Ovary (tissue), 10 donors: ENCODE measurements at regions of chr19 and their contacts with region 1.

Region 1: GRCh38 chr19:16185123-16185767 is at the start of gene FAM32A:
- DNase-seq: peak; percentile 99 to 100 (median 99)
- H3K4me3 ChIP-seq: peak within 1 kb of the TSS; percentile 63
- H3K27ac ChIP-seq: peak within 1 kb of the TSS in 1 of 2 donors; percentile 26
- H3K4me1 ChIP-seq: no peaks in the 10 kb centered on the region
- H3K27me3 ChIP-seq: no peaks in the 10 kb centered on the region
- CTCF ChIP-seq: peak; percentile 14 to 41 (median 26)
- EP300 ChIP-seq: no peak
- POLR2A ChIP-seq: peak; percentile 53
- total RNA-seq, gene FAM32A: 37.9 to 62.6 (median 43.7) TPM

Region 2: GRCh38 chr19:15629003-15629880 is 556.0 kb before region 1 on chr19:
- intact Hi-C with region 1: loop called in 2 of 4 experiments (anchors 5 kb)
- DNase-seq: peak; percentile 57 to 84 (median 79)
- H3K4me3 ChIP-seq: no peak overlapping the region
- H3K27ac ChIP-seq: no peak overlapping the region
- H3K4me1 ChIP-seq: no peaks in the 10 kb centered on the region
- H3K27me3 ChIP-seq: no peaks in the 10 kb centered on the region
- CTCF ChIP-seq: peak; percentile 72 to 83 (median 83)
- EP300 ChIP-seq: no peak
- POLR2A ChIP-seq: no peak

Region 3: DNA sequence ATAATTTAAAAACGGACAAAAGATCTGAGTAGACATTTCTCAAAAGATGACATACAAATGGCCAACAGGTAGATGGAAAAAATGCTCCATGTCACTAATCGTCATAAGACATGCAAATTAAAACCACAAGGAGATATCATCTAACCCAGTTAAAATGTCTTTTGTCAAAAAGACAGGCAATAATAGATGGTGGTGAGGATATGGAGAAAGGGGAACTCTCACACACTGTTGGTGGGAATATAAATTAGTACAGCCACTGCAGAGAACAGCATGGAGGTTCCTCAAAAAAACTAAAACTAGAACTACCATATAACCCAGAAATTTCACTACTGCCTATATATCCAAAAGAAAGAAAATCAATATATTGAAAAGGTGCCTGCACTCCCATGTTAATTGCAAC is 198.5 kb before region 1 on chr19:
- intact Hi-C with region 1: no loop called
- DNase-seq: no peak
- H3K4me3 ChIP-seq: no peak overlapping the region
- H3K27ac ChIP-seq: no peak overlapping the region
- H3K4me1 ChIP-seq: no peaks in the 10 kb centered on the region
- H3K27me3 ChIP-seq: no peaks in the 10 kb centered on the region
- CTCF ChIP-seq: no peak
- EP300 ChIP-seq: no peak
- POLR2A ChIP-seq: no peak

Region 4: DNA sequence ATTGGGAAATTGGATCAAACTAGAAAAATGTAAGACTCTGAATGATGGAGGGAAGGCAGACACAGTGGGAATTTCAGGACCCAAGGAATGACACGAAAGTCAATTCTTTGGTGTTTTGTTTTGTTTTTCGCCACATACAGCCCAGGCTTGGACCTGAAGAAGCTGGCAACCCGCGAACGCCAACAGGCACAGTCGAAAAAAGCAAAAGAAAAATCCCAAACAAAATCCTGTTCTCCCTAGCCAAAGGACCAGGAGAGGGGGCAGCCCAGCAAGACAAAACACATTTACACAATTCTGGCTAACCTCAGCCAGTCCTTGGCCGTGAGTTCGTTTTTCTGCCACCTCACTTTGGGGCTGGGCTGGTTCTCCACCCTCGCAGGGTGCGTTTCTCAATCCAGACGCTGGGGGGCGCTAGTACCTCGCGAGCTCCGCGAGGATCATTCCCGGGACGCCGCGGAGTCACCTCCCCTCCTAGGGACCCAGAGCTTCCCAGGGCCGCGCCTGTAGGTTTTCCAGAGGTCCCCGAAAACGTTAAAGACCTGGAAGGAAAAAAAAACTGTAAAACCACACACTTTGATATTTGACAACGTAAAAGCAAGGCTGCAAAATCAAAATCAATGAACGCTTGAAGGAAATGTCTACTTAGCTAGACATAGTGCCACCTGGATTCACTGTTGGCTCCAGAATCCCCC is 143.8 kb before region 1 on chr19:
- intact Hi-C with region 1: loop called (anchors 2 to 5 kb)
- DNase-seq: peak; percentile 80 to 91 (median 88)
- H3K4me3 ChIP-seq: no peak overlapping the region
- H3K27ac ChIP-seq: no peak overlapping the region
- H3K4me1 ChIP-seq: no peaks in the 10 kb centered on the region
- H3K27me3 ChIP-seq: no peaks in the 10 kb centered on the region
- CTCF ChIP-seq: peak; percentile 90 to 92 (median 90)
- EP300 ChIP-seq: no peak
- POLR2A ChIP-seq: no peak

Region 5: GRCh38 chr19:16205205-16206045 is 20.2 kb after region 1 on chr19:
- intact Hi-C with region 1: no loop called
- DNase-seq: peak in 3 of 5 donors; percentile 57 to 78 (median 69)
- H3K4me3 ChIP-seq: no peak overlapping the region
- H3K27ac ChIP-seq: peak overlapping the region in 1 of 2 donors; percentile 7
- H3K4me1 ChIP-seq: peaks cover 2% of the 10 kb centered on the region
- H3K27me3 ChIP-seq: no peaks in the 10 kb centered on the region
- CTCF ChIP-seq: no peak
- EP300 ChIP-seq: no peak
- POLR2A ChIP-seq: no peak

Region 6: GRCh38 chr19:16216744-16217670 is 31.8 kb after region 1 on chr19:
- intact Hi-C with region 1: no loop called
- DNase-seq: no peak
- H3K4me3 ChIP-seq: no peak overlapping the region
- H3K27ac ChIP-seq: no peak overlapping the region
- H3K4me1 ChIP-seq: no peaks in the 10 kb centered on the region
- H3K27me3 ChIP-seq: no peaks in the 10 kb centered on the region
- CTCF ChIP-seq: no peak
- EP300 ChIP-seq: no peak
- POLR2A ChIP-seq: no peak